ENCODE measurements at regions of chr12 and their contacts with region 1.

Region 1: DNA sequence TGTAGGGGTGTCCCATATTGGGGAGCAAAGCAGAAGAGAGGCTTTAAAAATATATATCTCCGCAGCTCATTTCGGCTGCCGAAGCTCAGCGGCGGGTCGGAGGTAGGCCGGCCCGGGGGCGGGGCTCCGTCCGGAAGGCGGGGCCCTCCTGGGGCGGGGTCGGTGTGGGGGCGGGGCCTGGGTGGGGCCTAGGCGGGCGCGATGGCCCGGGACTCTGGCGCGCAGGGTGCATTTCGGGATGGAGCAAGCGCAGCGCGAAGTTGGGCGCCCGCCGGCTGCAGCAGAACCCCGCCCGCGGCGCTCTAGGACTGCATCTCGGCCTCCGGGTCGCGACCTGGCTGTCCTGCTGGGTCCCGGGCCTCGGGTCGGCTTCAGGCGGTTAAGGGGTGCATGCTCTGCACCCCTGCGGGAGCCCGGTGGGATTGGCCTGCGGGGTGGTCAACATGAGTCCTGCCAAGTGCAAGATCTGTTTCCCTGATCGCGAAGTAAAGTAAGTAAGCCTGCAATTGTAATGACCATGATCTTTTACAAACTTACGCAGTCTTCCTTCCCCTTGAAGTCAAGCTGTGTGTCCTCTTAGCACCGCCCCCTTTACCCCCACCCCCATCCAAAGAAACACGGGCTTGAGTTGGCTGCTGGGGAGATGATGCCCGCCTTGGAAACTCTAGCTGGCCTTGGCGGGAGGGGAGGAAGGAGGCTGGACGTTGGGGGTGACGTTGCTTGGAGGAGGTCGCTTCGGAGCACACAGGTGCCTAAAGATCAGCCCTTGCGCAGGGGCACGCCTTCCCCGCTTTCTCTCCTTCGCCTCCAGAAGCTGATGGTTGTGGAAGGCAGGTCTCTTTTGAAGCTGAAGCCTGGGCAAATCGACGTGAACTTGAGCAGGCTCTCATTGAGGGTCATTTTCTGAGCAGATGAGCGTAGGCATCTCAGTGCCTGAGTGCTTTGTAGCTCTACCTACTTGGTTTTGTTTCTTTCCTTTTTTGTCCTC is 38.4 kb downstream of the ACACB start:
- DNase-seq: peak; percentile 71 to 90 (median 78)
- ATAC-seq: peak; percentile 95
- H3K4me3 ChIP-seq: peak overlapping the region; percentile 75
- H3K4me3 Mint-ChIP-seq: peak overlapping the region; percentile 96
- H3K27ac ChIP-seq: peak overlapping the region in 1 of 2 donors; percentile 17
- H3K27ac Mint-ChIP-seq: peak overlapping the region; percentile 93
- H3K4me1 ChIP-seq: peaks cover 16% of the 10 kb centered on the region
- H3K4me1 Mint-ChIP-seq: peaks cover 21% of the 10 kb centered on the region
- H3K27me3 ChIP-seq: no peaks in the 10 kb centered on the region
- H3K27me3 Mint-ChIP-seq: no peaks in the 10 kb centered on the region
- CTCF ChIP-seq: no peak

Region 2: DNA sequence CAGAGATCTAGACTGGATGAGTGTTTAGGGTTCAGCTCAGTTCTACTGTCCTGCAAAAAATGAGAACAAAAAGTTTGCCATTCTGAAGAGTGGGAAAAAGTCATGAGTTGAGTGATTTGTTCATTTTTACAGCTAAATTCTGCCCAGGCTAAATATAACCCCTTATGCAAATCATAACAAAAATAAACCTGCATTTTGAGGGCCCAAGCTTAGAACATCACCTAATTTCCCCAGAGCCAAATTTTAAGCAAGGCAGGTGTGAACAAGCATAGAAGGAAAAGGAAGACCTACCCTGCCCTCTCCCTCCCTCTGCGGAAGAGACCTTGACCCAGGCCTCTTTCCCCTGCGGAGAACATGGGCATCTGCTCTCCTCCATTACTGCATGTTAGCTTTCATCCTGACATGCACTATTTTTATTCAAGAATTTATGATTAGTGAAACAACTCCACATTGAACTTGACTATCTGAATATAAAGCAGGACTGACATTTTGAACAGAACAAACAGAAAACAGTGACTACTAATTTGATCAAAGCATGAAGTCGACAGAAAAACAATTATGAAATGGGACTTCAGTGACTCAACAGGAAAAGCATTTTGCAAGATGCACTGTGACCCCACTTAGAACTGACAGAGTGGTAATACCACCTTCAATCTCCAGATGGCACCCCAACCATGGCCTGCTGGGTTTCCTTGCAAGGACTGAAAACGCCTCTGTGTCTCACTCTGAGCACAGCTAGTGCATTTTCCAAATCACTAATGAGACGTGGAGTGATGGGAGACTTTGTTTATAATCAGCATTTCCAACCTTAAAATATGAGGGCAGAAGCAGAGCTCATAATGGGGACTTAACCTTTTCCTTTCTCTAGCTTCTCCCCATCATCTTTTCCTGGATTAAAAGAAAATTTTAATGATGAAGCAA is 490.1 kb before region 1 on chr12:
- CTCF ChIA-PET with region 1: no interaction called
- POLR2A ChIA-PET with region 1: no interaction called
- intact Hi-C with region 1: no loop called
- DNase-seq: peak; percentile 69 to 90 (median 79)
- ATAC-seq: peak; percentile 100
- H3K4me3 ChIP-seq: no peak overlapping the region
- H3K4me3 Mint-ChIP-seq: no peak overlapping the region
- H3K27ac ChIP-seq: no peak overlapping the region
- H3K27ac Mint-ChIP-seq: peak overlapping the region; percentile 72
- H3K4me1 ChIP-seq: peaks cover 6% of the 10 kb centered on the region
- H3K4me1 Mint-ChIP-seq: peaks cover 7% of the 10 kb centered on the region
- H3K27me3 ChIP-seq: no peaks in the 10 kb centered on the region
- H3K27me3 Mint-ChIP-seq: no peaks in the 10 kb centered on the region
- CTCF ChIP-seq: peak; percentile 91

Region 3: DNA sequence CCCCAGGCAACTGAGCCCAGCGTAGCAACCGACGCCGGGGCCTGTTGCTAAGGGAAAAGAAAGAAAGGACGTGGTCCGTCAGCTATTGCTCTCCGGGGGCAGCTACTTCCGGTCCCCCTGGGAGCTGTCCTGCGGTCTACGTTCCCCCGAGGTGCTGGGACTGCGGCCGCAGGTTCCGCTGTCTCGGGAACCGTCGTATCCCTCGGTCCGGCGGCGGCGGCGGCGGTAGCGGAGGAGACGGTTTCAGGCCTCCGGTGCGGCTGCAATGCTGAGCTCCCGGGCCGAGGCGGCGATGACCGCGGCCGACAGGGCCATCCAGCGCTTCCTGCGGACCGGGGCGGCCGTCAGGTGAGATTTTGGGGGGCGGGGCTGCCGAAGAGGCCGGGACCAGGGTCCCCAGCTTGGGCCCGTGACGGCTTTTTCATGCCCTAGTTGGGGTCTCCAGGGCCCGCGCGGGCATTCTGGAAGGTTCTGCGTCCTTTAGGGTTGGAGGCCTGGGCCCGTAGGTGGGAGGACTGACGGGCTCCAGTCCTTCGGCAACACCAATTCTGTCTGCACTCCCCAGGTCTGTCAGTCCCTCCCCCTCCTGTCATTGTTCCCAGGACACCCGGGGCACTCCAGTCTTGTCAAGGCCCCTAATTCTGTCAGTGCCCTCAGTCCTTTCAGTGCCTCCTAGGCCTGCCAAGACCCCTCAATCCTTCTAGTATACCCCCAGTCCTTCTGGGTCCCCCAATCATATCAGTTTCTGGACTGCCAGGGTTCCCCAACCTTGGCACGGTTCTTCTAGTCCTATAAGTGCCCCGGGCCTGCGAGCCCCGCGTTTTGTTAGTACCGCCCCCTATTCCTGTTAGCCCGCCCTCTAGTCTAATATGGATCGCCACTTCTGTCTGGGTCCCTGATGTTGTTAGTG is 102.1 kb before region 1 on chr12 and contains the start of gene USP30:
- CTCF ChIA-PET with region 1: no interaction called
- POLR2A ChIA-PET with region 1: interaction called, 7 read pairs
- intact Hi-C with region 1: loop called in 1 of 2 experiments (anchors 5 kb)
- DNase-seq: peak; percentile 75 to 93 (median 81)
- ATAC-seq: peak; percentile 77
- H3K4me3 ChIP-seq: peak within 1 kb of the TSS; percentile 92
- H3K4me3 Mint-ChIP-seq: peak within 1 kb of the TSS; percentile 98
- H3K27ac ChIP-seq: peak within 1 kb of the TSS; percentile 87
- H3K27ac Mint-ChIP-seq: peak within 1 kb of the TSS; percentile 86
- H3K4me1 ChIP-seq: peaks cover 23% of the 10 kb centered on the region
- H3K4me1 Mint-ChIP-seq: peaks cover 13% of the 10 kb centered on the region
- H3K27me3 ChIP-seq: no peaks in the 10 kb centered on the region
- H3K27me3 Mint-ChIP-seq: no peaks in the 10 kb centered on the region
- CTCF ChIP-seq: no peak
- total RNA-seq, gene USP30: 21.8 to 23.0 TPM